ENCODE measurements at regions of chr2 and their contacts with region 1.

Region 1: DNA sequence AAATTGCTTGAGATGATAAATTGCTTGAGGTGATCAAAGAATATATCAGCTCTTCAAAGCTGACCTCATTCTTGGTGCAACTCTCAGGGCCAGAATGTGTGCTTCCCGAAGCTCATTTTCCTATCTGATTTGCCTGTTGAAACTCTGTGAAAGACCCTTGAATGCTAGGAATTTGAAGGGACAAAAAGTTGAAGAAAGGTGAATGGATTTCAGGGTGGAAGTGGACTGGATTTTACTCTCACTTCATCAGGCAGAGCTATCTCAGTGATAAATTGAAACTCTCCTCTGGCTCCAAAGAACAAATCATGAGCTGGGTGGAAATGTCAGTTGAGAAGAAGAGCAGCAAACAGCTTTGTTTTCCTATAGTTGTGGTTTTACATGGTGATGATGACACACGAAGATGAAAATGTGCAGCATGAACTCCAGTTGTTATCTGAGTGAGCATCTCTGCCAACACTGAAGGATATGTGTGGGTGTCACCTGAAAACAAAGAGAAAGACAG is 34.4 kb downstream of the CD28 start:
- DNase-seq: peak; percentile 69
- H3K4me3 Mint-ChIP-seq: peak overlapping the region; percentile 54
- H3K27ac Mint-ChIP-seq: peak overlapping the region; percentile 97
- H3K4me1 Mint-ChIP-seq: peaks cover 88% of the 10 kb centered on the region
- H3K27me3 Mint-ChIP-seq: no peaks in the 10 kb centered on the region

Region 2: DNA sequence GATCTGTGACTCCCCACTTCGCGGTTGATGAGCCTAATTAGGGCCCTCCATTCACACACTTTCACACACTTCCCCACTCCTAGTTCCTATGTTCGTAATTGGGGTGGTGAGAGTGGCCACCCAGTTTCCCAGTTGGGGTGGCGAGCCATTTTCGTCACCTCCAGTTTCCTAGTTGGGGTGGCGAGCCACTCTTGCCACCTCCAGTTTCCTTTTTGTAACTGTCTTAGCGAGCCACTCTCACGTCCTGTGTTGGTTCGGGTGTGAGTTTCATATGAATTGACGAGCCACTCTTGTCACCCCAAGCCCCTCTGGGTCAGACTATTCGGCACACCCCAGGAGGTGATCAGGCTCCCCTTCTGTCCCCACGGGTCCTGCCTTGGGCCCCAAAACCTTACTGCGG is 488.0 kb before region 1 on chr2:
- CTCF ChIA-PET with region 1: no interaction called
- intact Hi-C with region 1: no loop called
- DNase-seq: no peak
- H3K4me3 Mint-ChIP-seq: no peak overlapping the region
- H3K27ac Mint-ChIP-seq: no peak overlapping the region
- H3K4me1 Mint-ChIP-seq: no peaks in the 10 kb centered on the region
- H3K27me3 Mint-ChIP-seq: no peaks in the 10 kb centered on the region

Region 3: GRCh38 chr2:203718087-203718486 is 22.7 kb before region 1 on chr2:
- CTCF ChIA-PET with region 1: interaction called, 27 read pairs
- intact Hi-C with region 1: loop called (anchors 1 kb)
- DNase-seq: peak; percentile 75
- H3K4me3 Mint-ChIP-seq: peak overlapping the region; percentile 60
- H3K27ac Mint-ChIP-seq: peak overlapping the region; percentile 95
- H3K4me1 Mint-ChIP-seq: peaks cover 97% of the 10 kb centered on the region
- H3K27me3 Mint-ChIP-seq: no peaks in the 10 kb centered on the region

Region 4: GRCh38 chr2:203804070-203804469 is 63.2 kb after region 1 on chr2:
- CTCF ChIA-PET with region 1: interaction called, 9 read pairs
- intact Hi-C with region 1: loop called (anchors 2 kb)
- DNase-seq: peak; percentile 55
- H3K4me3 Mint-ChIP-seq: no peak overlapping the region
- H3K27ac Mint-ChIP-seq: peak overlapping the region; percentile 27
- H3K4me1 Mint-ChIP-seq: peaks cover 75% of the 10 kb centered on the region
- H3K27me3 Mint-ChIP-seq: no peaks in the 10 kb centered on the region

Region 5: GRCh38 chr2:203887677-203888076 is 146.8 kb after region 1 on chr2:
- CTCF ChIA-PET with region 1: no interaction called
- intact Hi-C with region 1: loop called (anchors 1 kb)
- DNase-seq: no peak
- H3K4me3 Mint-ChIP-seq: no peak overlapping the region
- H3K27ac Mint-ChIP-seq: no peak overlapping the region
- H3K4me1 Mint-ChIP-seq: peaks cover 54% of the 10 kb centered on the region
- H3K27me3 Mint-ChIP-seq: no peaks in the 10 kb centered on the region

Measured in activated naive CD4-positive, alpha-beta T cell treated with anti-CD3 and anti-CD28 coated beads for 36 hours (primary cell).